ENCODE measurements at regions of chr7 and their contacts with region 1.

Region 1: DNA sequence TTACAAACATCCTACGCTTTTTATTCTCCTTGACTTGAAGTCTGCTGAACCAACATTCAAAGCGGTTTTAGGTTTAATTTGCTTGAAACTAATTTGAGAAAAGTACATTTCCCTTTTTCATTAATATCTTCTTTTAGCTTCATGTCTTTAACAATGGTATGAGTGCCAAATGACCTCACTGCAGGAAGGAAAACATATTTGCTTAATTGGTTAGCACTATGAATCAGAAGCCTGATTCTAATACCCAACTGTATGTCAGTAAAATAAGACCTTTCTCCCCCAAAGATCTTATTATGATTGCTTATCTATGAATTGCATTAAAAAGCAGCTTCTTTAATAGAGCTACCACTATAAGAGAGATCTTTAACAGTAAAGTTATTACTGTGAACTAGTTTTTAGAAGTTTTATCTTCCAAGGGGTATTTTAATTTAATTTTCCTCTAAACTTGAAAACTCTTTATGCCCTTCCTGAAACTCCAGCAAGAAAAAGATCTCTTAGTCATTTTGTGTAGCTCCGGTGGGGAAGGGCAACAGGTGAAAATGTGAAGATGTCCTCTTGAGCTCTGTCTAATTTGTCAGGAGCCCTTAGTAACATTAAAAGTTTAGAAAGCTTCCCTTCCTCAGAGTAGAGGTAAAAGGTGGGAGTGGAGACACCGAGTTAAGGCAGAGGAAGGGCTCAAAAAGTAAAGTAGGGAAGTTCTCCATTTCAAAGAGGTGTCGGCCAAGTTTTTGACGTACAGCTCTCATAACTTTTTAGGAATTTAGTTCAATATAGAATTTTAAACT is 6.1 kb downstream of the COL1A2 start:
- DNase-seq: no peak
- H3K4me3 ChIP-seq: peak overlapping the region; percentile 73
- CTCF ChIP-seq: no peak

Region 2: DNA sequence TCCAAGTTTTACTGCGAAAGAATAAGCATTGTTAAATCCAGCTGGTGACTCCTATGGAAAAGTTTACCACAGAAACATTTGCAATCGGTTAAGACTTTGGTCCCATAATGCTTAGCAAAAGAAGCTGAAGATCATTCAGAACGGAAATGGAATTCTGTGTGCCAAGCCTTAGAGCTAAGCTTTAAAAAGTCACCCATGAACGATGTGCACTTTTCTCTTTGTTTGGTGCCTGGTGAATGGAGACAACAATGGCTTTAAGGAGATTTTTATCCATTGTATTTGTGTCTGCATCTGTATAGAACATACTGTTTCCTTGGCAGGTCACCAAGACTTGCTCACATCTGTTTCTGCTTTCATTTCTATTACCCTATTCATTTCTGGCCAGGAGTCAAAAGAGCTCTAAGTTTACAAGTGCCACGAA is 32.5 kb before region 1 on chr7:
- CTCF ChIA-PET with region 1: interaction called, 11 read pairs
- POLR2A ChIA-PET with region 1: interaction called, 75 read pairs
- DNase-seq: peak; percentile 58
- H3K4me3 ChIP-seq: peak overlapping the region; percentile 41
- CTCF ChIP-seq: no peak

Region 3: DNA sequence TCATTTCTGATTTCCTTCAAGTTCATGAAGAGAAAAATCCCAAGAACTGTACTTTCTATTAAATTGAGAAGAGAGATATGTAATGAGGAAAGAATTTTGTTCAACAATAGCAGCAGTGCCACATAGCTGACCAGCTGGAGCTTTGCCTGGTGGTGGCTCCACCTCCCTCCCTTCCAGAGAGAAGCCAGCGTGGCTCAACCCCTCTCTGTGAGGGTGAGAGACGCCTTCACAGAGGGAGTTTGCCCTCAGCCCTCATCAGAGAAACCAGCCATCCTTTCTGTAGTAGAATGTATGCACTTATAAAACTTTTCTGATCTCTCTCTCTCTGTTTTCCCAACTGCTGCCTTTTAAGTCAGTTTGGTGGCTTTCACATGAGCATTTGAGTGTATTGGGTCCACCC is 26.6 kb before region 1 on chr7:
- CTCF ChIA-PET with region 1: interaction called, 21 read pairs
- POLR2A ChIA-PET with region 1: interaction called, 109 read pairs
- DNase-seq: no peak
- H3K4me3 ChIP-seq: peak overlapping the region; percentile 43
- CTCF ChIP-seq: no peak

Region 4: GRCh38 chr7:94414481-94414880 is 13.6 kb after region 1 on chr7:
- CTCF ChIA-PET with region 1: interaction called, 5 read pairs
- POLR2A ChIA-PET with region 1: interaction called, 30 read pairs
- DNase-seq: no peak
- H3K4me3 ChIP-seq: no peak overlapping the region
- CTCF ChIP-seq: no peak

Region 5: DNA sequence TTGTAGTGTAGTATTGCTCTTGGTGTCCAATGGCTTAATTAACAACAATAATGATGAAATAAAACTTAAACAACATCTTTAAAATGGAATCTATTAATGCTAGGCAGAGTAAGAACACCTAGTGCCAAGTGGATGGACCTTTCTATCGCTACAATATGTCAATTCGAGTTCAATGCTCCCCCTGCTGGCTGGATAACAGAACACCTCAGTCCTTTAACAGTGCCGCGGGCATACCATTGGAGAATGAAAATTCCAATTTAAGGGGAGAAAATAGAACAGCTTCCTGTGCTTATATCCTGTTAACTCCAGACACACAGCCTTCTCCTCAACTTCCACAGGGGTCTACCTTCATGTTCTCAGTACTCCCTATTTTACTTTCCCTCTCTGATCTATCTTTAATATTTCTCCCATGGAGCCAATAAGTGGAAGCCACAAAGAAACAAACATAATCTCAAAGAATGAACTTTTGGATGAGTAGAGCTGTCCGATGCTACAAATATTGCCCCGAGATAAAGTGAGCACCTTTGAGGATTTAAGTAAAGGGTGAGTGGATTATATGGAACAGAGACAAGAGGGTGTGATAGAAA is 35.3 kb after region 1 on chr7:
- CTCF ChIA-PET with region 1: interaction called, 14 read pairs
- POLR2A ChIA-PET with region 1: interaction called, 3 read pairs
- DNase-seq: no peak
- H3K4me3 ChIP-seq: no peak overlapping the region
- CTCF ChIP-seq: peak; percentile 69